Breast epithelium (tissue), 4 donors: ENCODE measurements at regions of chr7 and their contacts with region 1.

Region 1: GRCh38 chr7:141477865-141478264 is 73.3 kb upstream of the AGK start:
- DNase-seq: no peak
- H3K4me3 ChIP-seq: no peak overlapping the region
- H3K27ac ChIP-seq: no peak overlapping the region
- H3K4me1 ChIP-seq: no peaks in the 10 kb centered on the region
- H3K27me3 ChIP-seq: no peaks in the 10 kb centered on the region
- CTCF ChIP-seq: no peak
- POLR2A ChIP-seq: no peak

Region 2: GRCh38 chr7:140738280-140738679 is 739.6 kb before region 1 on chr7:
- intact Hi-C with region 1: loop called (anchors 5 kb)
- DNase-seq: no peak
- H3K4me3 ChIP-seq: no peak overlapping the region
- H3K27ac ChIP-seq: no peak overlapping the region
- H3K4me1 ChIP-seq: no peaks in the 10 kb centered on the region
- H3K27me3 ChIP-seq: no peaks in the 10 kb centered on the region
- CTCF ChIP-seq: no peak
- POLR2A ChIP-seq: no peak

Region 3: DNA sequence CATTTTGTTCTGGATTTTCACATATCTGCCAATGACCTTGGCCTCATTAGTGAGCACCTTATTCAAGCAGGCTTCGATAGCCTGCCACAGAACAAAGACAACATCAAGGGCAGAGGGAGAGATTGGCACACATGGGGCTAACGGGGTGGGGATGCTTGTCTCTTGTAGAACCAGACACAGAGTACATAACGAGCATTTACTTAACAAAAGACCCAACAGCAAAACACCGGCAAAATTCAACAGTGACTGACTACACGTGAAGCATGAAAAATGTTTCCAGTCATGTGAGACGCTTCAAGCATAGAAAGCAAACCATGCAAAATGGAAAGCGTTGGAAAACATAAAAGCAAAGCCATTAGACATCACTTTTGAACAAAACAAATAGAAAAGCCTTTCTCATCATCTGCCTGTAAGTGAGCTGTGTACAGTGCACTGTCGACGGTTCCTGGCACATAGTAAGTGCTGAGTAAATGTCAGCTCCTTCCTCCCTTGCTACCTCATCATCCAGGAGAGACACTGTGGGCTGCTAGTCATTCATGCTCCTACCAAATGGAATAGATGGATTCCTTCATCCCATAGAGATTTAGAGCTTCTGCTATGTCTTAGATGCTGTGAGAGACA is 61.1 kb before region 1 on chr7:
- intact Hi-C with region 1: no loop called
- DNase-seq: no peak
- H3K4me3 ChIP-seq: no peak overlapping the region
- H3K27ac ChIP-seq: no peak overlapping the region
- H3K4me1 ChIP-seq: no peaks in the 10 kb centered on the region
- H3K27me3 ChIP-seq: no peaks in the 10 kb centered on the region
- CTCF ChIP-seq: no peak
- POLR2A ChIP-seq: no peak